ENCODE measurements at regions of chrX and their contacts with region 1.

Region 1: DNA sequence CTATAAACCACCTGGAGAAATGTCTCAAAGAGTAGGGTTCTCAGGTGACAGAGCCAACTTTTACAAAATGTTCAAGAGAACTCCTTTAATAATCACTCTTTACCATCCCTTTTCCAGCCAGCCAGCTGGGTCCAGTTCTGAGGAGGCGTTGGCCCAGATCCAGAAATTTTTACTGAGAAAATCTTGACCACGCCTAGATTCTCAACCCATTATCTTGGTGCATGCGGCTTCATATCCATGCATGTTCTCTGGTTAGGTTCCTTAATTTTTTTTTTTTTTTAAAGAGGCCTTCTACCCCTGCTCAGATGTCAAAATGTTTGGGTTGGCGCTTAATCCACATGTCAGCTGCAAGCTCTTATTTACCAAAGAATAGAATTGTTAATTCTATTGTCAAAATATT is 12.0 kb upstream of the MAP7D2 start:
- DNase-seq: no peak

Region 2: GRCh38 chrX:20066968-20067708 is 61.5 kb before region 1 on chrX:
- CTCF ChIA-PET with region 1: no interaction called
- POLR2A ChIA-PET with region 1: no interaction called
- DNase-seq: peak; percentile 58

Region 3: DNA sequence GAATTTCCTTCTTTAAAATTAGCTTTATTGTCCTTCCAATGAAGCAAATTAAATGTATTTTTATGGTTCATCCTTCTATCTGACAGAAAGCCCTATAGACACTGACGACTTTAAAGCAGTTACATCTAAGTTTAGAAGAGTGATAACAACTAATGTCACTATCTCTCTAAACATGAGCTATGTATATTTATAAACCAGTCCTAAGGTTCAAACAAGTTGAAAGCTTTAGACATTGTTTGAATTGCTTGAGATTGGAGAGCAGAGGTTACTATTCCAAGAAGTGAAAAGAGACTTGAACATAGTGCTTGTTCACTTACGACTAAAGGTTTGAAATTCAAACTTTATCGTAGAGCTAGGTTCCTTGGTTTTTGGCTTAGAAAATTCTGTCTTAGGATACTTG is 43.2 kb after region 1 on chrX:
- CTCF ChIA-PET with region 1: no interaction called
- POLR2A ChIA-PET with region 1: no interaction called
- DNase-seq: no peak

Region 4: GRCh38 chrX:20412871-20413486 is 284.3 kb after region 1 on chrX:
- CTCF ChIA-PET with region 1: interaction called, 10 read pairs
- POLR2A ChIA-PET with region 1: no interaction called
- DNase-seq: no peak